Activated T-helper 1 cell treated with anti-CD3 and anti-CD28 coated beads, Interleukin-12 subunit alpha, Interleukin-12 subunit beta, Interleukin-2, Interleukin-4 antibody, amounts not matched to agents 30 ng/mL and 10 ng/mL and 1 ng/mL, durations not matched to agents 14 hours and 24 hours and 36 hours (primary cell): ENCODE measurements at regions of chr13 and their contacts with region 1.

Region 1: GRCh38 chr13:39037880-39038568 is at the starts of genes NHLRC3 and PROSER1:
- DNase-seq: peak; percentile 68
- H3K4me3 Mint-ChIP-seq: peak within 1 kb of the TSS; percentile 91
- H3K27ac Mint-ChIP-seq: peak within 1 kb of the TSS; percentile 94
- H3K4me1 Mint-ChIP-seq: peaks cover 64% of the 10 kb centered on the region
- H3K27me3 Mint-ChIP-seq: no peaks in the 10 kb centered on the region
- total RNA-seq, gene NHLRC3: 19.2 and 20.4 TPM in 2 replicates
- total RNA-seq, gene PROSER1: 92.9 and 103 TPM in 2 replicates

Region 2: GRCh38 chr13:37058910-37059847 is 1978.8 kb before region 1 on chr13 and contains the start of gene SUPT20H:
- intact Hi-C with region 1: loop called (anchors 5 kb)
- DNase-seq: peak; percentile 86
- H3K4me3 Mint-ChIP-seq: peak within 1 kb of the TSS; percentile 96
- H3K27ac Mint-ChIP-seq: peak within 1 kb of the TSS; percentile 96
- H3K4me1 Mint-ChIP-seq: peaks cover 11% of the 10 kb centered on the region
- H3K27me3 Mint-ChIP-seq: peaks cover 3% of the 10 kb centered on the region
- total RNA-seq, gene SUPT20H: 73.2 and 75.7 TPM in 2 replicates

Region 3: DNA sequence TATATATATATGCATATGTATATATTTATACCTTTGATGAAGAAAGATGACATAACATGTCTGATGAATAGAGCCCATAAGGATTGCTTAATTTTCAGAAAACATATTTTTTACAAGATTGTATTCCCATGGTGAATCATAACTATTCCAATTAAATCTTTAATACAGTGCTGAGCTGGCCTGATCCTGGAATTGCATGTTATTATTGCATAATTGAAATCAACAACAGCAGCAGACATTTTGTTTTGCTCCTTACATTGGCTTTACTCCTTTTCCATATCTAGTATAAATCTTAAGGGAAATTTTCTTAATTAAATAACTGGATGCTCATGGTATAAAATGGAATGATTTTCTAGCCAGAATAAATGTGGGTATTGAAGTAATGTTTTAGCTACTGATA is 1461.4 kb before region 1 on chr13:
- intact Hi-C with region 1: no loop called
- DNase-seq: no peak
- H3K4me3 Mint-ChIP-seq: no peak overlapping the region
- H3K27ac Mint-ChIP-seq: no peak overlapping the region
- H3K4me1 Mint-ChIP-seq: no peaks in the 10 kb centered on the region
- H3K27me3 Mint-ChIP-seq: no peaks in the 10 kb centered on the region

Region 4: DNA sequence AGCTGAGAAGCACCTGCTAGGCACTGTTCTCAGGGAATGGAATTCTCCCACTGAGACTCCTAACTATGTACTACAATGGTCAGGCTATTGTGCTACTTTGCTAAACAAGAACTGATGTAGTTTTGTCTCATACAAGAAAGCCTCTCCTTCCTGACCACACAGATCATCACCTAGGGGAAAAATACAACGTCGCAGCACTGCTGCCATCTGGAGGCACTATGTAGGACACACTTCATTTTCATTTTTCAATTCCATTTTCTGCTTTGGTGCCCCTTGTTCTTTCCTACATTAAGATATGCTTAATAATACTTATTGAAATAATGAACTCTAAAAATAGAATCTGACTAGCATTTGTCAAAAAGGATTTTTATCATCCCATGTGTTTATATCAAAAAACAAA is 21.2 kb before region 1 on chr13:
- intact Hi-C with region 1: loop called (anchors 1 kb)
- DNase-seq: no peak
- H3K4me3 Mint-ChIP-seq: no peak overlapping the region
- H3K27ac Mint-ChIP-seq: peak overlapping the region; percentile 15
- H3K4me1 Mint-ChIP-seq: peaks cover 24% of the 10 kb centered on the region
- H3K27me3 Mint-ChIP-seq: no peaks in the 10 kb centered on the region

Region 5: DNA sequence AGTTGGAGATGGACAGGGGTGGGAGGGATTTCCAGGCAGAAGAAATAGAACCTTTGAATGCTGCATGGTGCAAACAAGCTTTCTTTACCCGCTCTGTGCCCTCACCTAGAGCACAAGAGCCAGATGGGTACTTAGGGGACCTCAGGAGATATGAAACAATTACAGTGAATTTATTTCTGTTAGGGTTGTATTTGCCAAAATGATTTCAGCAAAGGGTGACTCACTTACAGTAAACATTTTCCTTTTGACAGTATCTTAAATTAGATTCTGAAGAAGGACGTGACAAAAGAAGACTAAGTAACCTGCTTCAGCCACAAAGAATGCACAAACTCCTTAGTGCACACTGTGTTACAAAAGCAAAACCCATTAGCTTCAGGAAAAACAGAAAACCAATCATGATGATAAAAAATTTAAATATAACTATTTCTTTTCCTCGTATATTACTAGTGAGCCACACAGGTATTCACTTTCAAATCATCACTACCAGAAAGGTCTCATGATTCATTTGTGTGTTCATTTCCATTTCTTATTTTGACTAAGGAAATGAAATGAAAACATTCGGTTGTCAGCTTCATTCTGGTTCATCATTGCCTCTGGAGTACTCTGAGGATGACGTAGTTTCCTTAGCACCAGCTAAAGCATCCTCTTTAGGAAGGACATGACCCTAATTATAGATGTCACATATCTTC is 159.1 kb after region 1 on chr13:
- intact Hi-C with region 1: loop called (anchors 2 kb)
- DNase-seq: no peak
- H3K4me3 Mint-ChIP-seq: no peak overlapping the region
- H3K27ac Mint-ChIP-seq: peak overlapping the region; percentile 59
- H3K4me1 Mint-ChIP-seq: peaks cover 13% of the 10 kb centered on the region
- H3K27me3 Mint-ChIP-seq: no peaks in the 10 kb centered on the region

Region 6: DNA sequence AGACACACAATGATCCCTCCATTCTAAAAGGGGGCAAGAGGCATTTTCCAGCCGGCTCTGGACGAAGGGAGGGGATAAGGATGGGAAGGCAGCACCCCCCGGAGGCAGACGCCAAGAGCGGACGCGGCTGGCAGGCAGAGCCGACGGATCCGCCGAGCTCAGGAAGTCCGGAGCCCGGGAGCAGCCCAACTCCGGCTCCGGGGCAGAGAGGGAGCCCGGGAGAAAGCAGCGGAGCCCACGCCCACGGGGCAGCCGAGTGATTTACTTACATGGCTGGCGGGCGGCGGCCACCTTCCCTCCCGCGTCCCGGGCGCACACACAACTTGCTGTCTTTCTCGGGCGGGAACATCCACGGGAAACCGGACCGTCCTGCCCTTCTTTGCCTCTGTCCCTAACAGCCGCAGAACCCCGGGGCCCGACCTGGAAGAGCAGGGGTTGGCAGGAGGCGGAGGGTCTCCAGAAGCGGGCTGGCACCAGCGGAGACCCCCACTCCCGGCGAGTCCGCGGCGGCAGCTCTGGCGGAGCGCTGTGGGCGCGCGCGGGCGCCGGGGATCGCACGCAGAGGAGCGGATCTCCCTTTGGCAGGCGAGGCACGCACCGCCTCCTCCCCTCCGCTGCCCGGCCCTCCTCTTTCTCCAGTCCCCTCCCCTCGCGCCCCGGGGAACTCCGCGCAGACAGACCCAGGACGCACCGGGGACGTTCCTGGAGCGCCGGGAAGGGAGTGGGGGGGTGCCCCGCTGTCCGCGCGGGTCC is 564.8 kb after region 1 on chr13 and contains the start of gene LHFPL6:
- intact Hi-C with region 1: loop called (anchors 5 kb)
- DNase-seq: peak; percentile 67
- H3K4me3 Mint-ChIP-seq: peak within 1 kb of the TSS; percentile 83
- H3K27ac Mint-ChIP-seq: peak within 1 kb of the TSS; percentile 72
- H3K4me1 Mint-ChIP-seq: peaks cover 16% of the 10 kb centered on the region
- H3K27me3 Mint-ChIP-seq: peaks cover 47% of the 10 kb centered on the region
- total RNA-seq, gene LHFPL6: 4.2 and 4.8 TPM in 2 replicates

Region 7: DNA sequence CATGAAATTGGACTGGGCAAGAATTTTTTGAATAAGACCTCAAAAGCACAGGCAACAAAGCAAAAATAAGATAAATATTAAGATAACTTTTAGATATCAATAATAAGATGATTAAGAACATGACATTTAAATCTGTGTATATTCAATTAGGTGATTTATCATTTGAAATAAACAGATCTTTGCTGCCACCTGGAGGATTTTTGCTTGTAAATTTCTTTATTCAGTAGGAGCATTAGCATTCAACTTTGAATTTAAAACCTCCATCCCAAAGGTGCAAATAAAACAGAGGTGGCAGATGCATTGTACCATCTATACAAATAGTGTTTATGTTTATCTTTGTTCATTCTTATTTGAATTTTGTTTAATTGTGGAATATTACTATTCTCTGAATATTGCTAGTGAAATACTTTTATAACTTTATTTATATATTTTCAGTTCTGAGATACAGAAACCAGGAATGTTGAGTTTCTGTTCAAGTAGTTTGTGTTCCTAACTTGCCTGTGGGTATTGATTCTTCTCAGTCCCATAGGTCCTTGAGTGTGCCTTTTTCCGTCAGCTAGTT is 638.4 kb after region 1 on chr13:
- intact Hi-C with region 1: loop called (anchors 5 kb)
- DNase-seq: no peak
- H3K4me3 Mint-ChIP-seq: no peak overlapping the region
- H3K27ac Mint-ChIP-seq: no peak overlapping the region
- H3K4me1 Mint-ChIP-seq: no peaks in the 10 kb centered on the region
- H3K27me3 Mint-ChIP-seq: no peaks in the 10 kb centered on the region